Heart right ventricle (tissue), 16 donors: ENCODE measurements at regions of chr11 and their contacts with region 1.

Region 1: DNA sequence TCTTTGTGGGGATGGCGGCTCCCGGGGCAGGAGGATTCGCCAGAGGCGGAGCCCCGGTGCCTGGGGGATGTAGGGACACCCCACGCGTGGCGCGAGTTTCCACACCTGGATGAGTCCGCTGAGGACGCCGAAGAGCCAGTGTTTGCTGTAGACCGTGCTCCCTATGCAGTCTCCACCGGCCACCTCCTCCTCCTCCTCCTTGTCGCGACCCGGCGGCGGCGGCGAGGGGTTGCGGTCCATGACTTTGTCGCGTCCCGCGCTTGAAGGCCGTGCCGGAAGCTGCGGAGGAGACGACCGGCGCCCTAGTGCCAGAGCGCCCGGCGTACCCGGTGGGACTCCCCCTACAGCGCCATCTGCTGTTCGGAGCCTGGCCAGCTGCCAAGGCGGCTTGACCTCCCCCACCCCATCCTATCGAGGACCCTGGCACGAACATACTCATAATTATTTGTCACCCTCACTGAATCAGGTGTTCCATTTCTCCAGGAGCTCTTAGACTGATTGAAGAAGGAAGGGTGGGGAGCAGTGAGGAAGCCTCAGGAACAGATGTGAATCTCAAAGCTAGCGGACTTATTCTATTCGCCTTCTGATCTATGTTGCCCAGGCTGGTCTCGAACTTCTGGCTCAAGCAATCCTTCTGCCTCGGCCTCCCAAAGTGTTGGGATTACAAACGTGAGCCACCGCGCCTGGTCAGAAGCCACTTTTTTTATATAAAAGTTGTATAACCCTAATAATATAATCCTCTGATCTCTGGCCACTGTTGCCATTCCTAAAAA is at the start of gene SAAL1:
- DNase-seq: peak; percentile 85 to 90
- ATAC-seq: peak; percentile 97 to 99 (median 98)
- H3K4me3 ChIP-seq: peak within 1 kb of the TSS; percentile 79 to 99 (median 93)
- H3K27ac ChIP-seq: peak within 1 kb of the TSS in 9 of 10 donors; percentile 37 to 88 (median 76)
- H3K4me1 ChIP-seq: peaks cover 0 to 20% (median 14%) of the 10 kb centered on the region in 9 donors
- H3K27me3 ChIP-seq: peaks cover 0 to 13% (median 4%) of the 10 kb centered on the region in 7 donors
- CTCF ChIP-seq: peak; percentile 35 to 93 (median 72)
- total RNA-seq, gene SAAL1: 4.9 to 11.8 (median 7.1) TPM

Region 2: DNA sequence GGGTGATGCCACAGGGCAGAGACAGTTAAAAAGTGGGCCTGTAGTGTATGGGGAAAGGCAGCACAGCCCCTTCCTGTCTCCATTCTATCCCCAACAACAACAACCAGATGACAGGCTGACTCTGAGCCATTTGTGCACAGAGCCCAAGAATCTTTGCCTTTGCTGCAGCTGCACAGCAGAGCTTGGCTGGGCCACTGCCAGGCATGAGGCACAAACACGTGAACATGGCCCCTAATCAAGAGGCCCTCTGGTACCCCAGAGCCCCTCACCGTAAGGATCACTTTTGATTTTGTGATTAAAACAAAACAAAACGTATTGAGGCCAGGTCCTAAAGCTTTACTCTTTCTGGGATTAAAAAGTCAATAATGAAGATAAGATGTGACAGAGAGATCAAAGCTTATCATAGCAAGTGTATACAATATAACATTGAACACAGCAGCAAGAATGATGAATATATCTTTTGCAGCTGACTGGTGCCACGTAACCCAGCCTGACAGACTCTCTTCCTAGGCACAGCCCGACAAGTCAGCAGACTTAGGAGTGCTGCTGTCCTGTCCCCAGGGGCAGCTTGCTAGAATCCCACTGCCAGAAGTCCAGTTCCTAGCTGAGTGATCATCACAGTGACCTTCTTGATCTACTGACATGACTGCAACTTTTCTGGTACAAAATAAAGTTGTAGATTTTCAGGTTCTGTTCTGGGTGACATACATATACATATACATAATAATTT is 210.9 kb before region 1 on chr11:
- intact Hi-C with region 1: no loop called
- DNase-seq: peak in 1 of 2 donors; percentile 18
- ATAC-seq: peak in 5 of 8 donors; percentile 22 to 54 (median 48)
- H3K4me3 ChIP-seq: no peak overlapping the region
- H3K27ac ChIP-seq: no peak overlapping the region
- H3K4me1 ChIP-seq: peaks cover 0 to 11% (median 6%) of the 10 kb centered on the region in 9 donors
- H3K27me3 ChIP-seq: no peaks in the 10 kb centered on the region
- CTCF ChIP-seq: no peak

Region 3: GRCh38 chr11:17991783-17992433 is 114.1 kb before region 1 on chr11:
- intact Hi-C with region 1: loop called in 3 of 10 experiments (anchors 5 to 10 kb)
- DNase-seq: peak in 1 of 2 donors; percentile 27
- ATAC-seq: peak in 3 of 8 donors; percentile 38 to 52 (median 49)
- H3K4me3 ChIP-seq: no peak overlapping the region
- H3K27ac ChIP-seq: no peak overlapping the region
- H3K4me1 ChIP-seq: no peaks in the 10 kb centered on the region
- H3K27me3 ChIP-seq: no peaks in the 10 kb centered on the region
- CTCF ChIP-seq: peak; percentile 53 to 82 (median 76)

Region 4: DNA sequence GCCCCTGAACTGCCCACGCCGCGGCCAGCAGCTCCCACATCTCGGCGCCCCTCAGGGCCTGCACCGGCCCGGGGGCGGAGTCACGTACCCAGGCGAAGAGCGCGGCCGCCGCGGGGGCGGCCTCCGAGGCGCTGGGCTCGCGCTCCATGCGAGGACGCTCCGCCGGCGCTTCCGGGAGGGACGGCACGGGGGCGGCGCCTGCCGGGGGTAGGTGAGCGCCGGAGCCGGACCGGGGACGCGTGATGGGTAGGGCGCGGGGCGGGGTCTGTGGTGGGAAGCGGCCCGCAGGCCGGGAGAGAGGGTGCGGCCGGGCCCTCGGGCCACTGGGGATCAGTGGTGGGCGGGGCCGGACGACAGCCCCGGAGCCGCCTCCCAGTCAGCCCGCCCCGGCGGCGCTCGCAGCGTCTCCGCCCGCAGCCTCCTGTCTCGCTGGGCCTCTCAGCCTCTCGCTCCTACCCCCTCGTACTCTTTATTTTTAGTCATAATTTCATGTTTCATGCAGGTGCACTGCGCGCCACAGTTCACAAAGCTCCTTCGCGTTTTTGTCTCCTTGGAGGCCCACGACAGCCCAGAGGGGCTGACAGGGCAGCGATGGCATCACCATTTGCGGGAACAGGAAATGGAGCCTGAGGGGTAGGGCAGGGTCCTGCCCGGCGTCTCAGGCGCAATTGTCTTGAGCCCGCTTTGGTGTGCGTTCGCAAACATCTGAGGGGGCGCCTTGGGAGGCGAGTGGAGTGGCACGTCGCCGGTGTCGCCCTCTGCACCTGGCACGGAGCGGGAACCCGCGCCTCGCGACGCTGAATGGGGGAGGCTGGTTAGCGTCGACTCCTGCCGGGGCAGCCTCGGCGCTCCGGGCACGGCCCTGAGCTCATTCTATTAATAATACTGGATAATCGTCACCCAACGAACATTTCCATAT is 92.9 kb before region 1 on chr11 and contains the start of gene SERGEF:
- intact Hi-C with region 1: loop called in 4 of 10 experiments (anchors 2 to 10 kb)
- DNase-seq: peak; percentile 86 to 96
- ATAC-seq: peak; percentile 96 to 99 (median 97)
- H3K4me3 ChIP-seq: peak within 1 kb of the TSS; percentile 58 to 96 (median 77)
- H3K27ac ChIP-seq: peak within 1 kb of the TSS; percentile 3 to 93 (median 79)
- H3K4me1 ChIP-seq: peaks cover 0 to 19% (median 11%) of the 10 kb centered on the region in 9 donors
- H3K27me3 ChIP-seq: no peaks in the 10 kb centered on the region
- CTCF ChIP-seq: peak in 6 of 9 donors; percentile 4 to 54 (median 20)
- total RNA-seq, gene SERGEF: 14.8 to 25.3 (median 19.8) TPM

Region 5: GRCh38 chr11:18282626-18283025 is 176.6 kb after region 1 on chr11:
- intact Hi-C with region 1: no loop called
- DNase-seq: no peak
- ATAC-seq: no peak
- H3K4me3 ChIP-seq: no peak overlapping the region
- H3K27ac ChIP-seq: no peak overlapping the region
- H3K4me1 ChIP-seq: peaks cover 0 to 6% (median 0%) of the 10 kb centered on the region in 9 donors
- H3K27me3 ChIP-seq: no peaks in the 10 kb centered on the region
- CTCF ChIP-seq: no peak